ENCODE measurements at regions of chr20 and their contacts with region 1.

Region 1: GRCh38 chr20:29123861-29124260 is 2133.6 kb upstream of the DEFB115 start:
- DNase-seq: no peak
- ATAC-seq: no peak
- H3K4me3 ChIP-seq: no peak overlapping the region
- H3K4me3 Mint-ChIP-seq: no peak overlapping the region
- H3K27ac ChIP-seq: no peak overlapping the region
- H3K27ac Mint-ChIP-seq: no peak overlapping the region
- H3K4me1 ChIP-seq: no peaks in the 10 kb centered on the region
- H3K4me1 Mint-ChIP-seq: no peaks in the 10 kb centered on the region
- H3K27me3 ChIP-seq: no peaks in the 10 kb centered on the region
- H3K27me3 Mint-ChIP-seq: no peaks in the 10 kb centered on the region

Region 2: DNA sequence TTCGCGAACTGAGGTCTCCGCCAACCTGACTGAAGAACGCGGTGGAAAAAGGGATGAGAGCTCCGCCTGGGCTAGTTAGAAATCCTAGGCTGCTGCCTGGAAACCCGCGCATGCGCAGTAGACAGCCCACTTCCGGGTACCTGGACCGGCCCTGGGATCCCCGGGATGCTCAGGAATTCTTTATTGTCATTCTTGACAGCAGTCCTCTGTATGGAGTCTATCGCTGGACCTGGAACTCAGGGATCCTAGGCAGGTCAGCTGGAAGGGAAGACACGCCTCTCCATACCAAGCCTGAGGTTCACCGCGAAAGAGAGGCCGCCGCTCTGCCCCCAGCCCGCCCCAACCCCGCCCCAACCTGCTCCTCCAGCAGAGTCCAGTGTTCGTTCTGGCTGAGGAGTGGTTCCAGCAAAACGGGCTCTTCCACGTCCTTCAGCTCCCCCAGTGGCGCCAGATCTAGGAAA is 754.5 kb after region 1 on chr20:
- CTCF ChIA-PET with region 1: no interaction called
- POLR2A ChIA-PET with region 1: no interaction called
- intact Hi-C with region 1: loop called in 1 of 2 experiments (anchors 10 kb)
- DNase-seq: no peak
- ATAC-seq: peak; percentile 33
- H3K4me3 ChIP-seq: no peak overlapping the region
- H3K4me3 Mint-ChIP-seq: peak overlapping the region in 4 of 10 donors; percentile 52 to 71 (median 61)
- H3K27ac ChIP-seq: no peak overlapping the region
- H3K27ac Mint-ChIP-seq: no peak overlapping the region
- H3K4me1 ChIP-seq: no peaks in the 10 kb centered on the region
- H3K4me1 Mint-ChIP-seq: peaks cover 0 to 5% (median 0%) of the 10 kb centered on the region in 7 donors
- H3K27me3 ChIP-seq: no peaks in the 10 kb centered on the region
- H3K27me3 Mint-ChIP-seq: peaks cover 0 to 11% (median 3%) of the 10 kb centered on the region in 5 donors